ENCODE measurements at regions of chr6 and their contacts with region 1.

Region 1: GRCh38 chr6:31139599-31139998 is 733 bp upstream of the PSORS1C2 start:
- DNase-seq: no peak
- ATAC-seq: no peak
- H3K4me3 ChIP-seq: no peak overlapping the region
- H3K27ac ChIP-seq: no peak overlapping the region
- H3K4me1 ChIP-seq: no peaks in the 10 kb centered on the region
- H3K27me3 ChIP-seq: no peaks in the 10 kb centered on the region
- CTCF ChIP-seq: no peak
- POLR2A ChIP-seq: no peak

Region 2: GRCh38 chr6:29720863-29721262 is 1418.7 kb before region 1 on chr6:
- in situ Hi-C with region 1: no loop called
- intact Hi-C with region 1: no loop called
- DNase-seq: no peak
- ATAC-seq: no peak
- H3K4me3 ChIP-seq: no peak overlapping the region
- H3K27ac ChIP-seq: no peak overlapping the region
- H3K4me1 ChIP-seq: no peaks in the 10 kb centered on the region
- H3K27me3 ChIP-seq: peaks cover 0 to 16% (median 9%) of the 10 kb centered on the region in 3 donors
- CTCF ChIP-seq: no peak
- POLR2A ChIP-seq: no peak

Region 3: DNA sequence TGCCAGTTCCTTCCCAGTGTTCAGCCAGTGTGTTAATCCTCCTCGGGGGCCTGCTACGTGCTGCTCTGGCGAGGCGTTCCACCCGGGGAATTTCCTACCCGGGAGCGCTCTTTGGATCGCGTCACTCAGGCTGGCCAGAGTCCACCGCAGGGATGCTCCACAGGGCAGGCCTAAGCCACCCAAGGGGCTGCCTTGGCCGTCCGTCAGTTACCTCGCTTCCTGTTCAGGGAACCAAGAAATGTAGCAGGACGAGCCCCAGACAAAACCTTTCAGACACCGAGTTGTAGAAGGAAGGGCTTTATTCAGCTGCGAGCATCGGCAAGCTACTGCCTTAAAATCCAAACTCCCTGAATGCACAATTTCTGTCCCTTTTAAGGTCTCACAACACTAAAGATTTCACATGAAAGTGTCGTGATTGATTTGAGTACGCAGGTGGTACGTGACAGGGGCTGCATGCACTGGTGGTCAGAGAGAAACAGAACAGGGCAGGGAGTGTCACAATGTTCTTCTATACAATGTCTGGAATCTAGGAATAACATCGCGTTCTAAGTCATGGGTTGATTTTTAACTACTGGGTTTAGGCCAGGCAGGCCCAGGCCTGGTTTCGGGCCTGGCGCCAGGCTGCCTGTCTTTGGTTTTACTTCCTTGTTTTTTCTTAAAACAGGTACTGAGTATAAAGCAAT is 46.6 kb after region 1 on chr6:
- in situ Hi-C with region 1: loop called (anchors 5 to 10 kb)
- intact Hi-C with region 1: no loop called
- DNase-seq: peak; percentile 52 to 78
- ATAC-seq: peak; percentile 80 to 81
- H3K4me3 ChIP-seq: peak overlapping the region; percentile 37 to 47 (median 42)
- H3K27ac ChIP-seq: peak overlapping the region; percentile 73 to 88 (median 81)
- H3K4me1 ChIP-seq: peaks cover 8 to 16% of the 10 kb centered on the region in 2 donors
- H3K27me3 ChIP-seq: no peaks in the 10 kb centered on the region
- CTCF ChIP-seq: no peak
- POLR2A ChIP-seq: peak; percentile 6 to 50

Region 4: GRCh38 chr6:31366693-31367470 is 227.3 kb after region 1 on chr6:
- in situ Hi-C with region 1: loop called (anchors 5 kb)
- intact Hi-C with region 1: loop called (anchors 1 kb)
- DNase-seq: peak; percentile 48 to 74
- ATAC-seq: peak; percentile 98 to 99
- H3K4me3 ChIP-seq: peak overlapping the region in 3 of 4 donors; percentile 35 to 49 (median 37)
- H3K27ac ChIP-seq: no peak overlapping the region
- H3K4me1 ChIP-seq: no peaks in the 10 kb centered on the region
- H3K27me3 ChIP-seq: peaks cover 0 to 7% (median 4%) of the 10 kb centered on the region in 3 donors
- CTCF ChIP-seq: peak; percentile 81 to 94 (median 94)
- POLR2A ChIP-seq: no peak

Region 5: DNA sequence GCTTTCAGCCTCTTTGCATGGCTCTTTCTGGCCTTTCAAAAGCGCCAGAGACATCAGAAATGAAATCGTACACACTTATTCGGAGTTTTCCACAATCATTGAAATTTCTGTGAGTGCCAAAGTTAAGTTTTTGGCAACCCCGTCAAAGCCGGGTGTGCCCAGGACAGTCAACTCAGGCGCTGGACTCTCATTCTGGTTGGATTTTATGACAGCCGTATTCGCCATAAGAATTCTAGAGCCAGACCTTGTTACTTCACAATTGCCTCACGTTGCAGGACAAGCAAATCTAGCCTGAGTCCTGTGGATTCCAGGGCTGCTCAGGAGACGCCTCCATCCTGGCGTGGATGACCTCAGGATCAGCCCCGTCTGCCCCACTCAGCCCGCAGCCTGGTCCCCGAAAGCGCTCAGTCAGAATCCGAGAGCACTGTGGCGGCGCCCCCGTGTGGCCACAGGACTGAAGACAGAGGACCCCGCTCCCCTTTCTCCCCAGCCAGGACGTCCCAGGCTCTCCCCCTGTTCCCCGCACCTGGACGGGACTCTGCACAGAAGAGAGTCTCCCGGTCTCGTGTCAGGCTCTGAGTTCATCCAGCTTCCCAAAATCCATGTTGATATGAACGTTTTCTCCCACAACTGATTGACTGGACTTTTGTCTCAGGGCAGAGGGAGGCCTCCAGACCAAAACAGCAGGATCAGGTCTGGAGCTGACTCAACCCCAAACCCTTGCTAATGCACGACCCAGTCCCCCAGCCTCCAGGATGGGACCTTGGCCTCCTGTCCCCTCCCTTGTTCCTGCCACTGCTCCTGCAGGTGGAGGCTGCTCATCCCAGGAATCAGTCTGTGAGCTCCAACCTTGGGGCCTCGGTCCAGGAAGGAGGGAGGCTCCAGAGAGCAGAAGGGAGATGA is 302.0 kb after region 1 on chr6:
- in situ Hi-C with region 1: loop called in 1 of 4 experiments (anchors 10 kb)
- intact Hi-C with region 1: no loop called
- DNase-seq: peak; percentile 40 to 70
- ATAC-seq: peak; percentile 82 to 95
- H3K4me3 ChIP-seq: peak overlapping the region in 2 of 4 donors; percentile 40 to 45
- H3K27ac ChIP-seq: no peak overlapping the region
- H3K4me1 ChIP-seq: peaks cover 0 to 4% of the 10 kb centered on the region in 2 donors
- H3K27me3 ChIP-seq: peaks cover 0 to 3% (median 0%) of the 10 kb centered on the region in 3 donors
- CTCF ChIP-seq: peak; percentile 80 to 85 (median 83)
- POLR2A ChIP-seq: no peak

Region 6: GRCh38 chr6:31493875-31494694 is 354.5 kb after region 1 on chr6:
- in situ Hi-C with region 1: no loop called
- intact Hi-C with region 1: no loop called
- DNase-seq: peak; percentile 50 to 59
- ATAC-seq: peak; percentile 71 to 75
- H3K4me3 ChIP-seq: peak overlapping the region; percentile 48 to 64 (median 56)
- H3K27ac ChIP-seq: peak overlapping the region; percentile 44 to 60 (median 58)
- H3K4me1 ChIP-seq: peaks cover 0 to 16% of the 10 kb centered on the region in 2 donors
- H3K27me3 ChIP-seq: peaks cover 10 to 41% (median 35%) of the 10 kb centered on the region in 3 donors
- CTCF ChIP-seq: peak; percentile 50 to 75 (median 60)
- POLR2A ChIP-seq: no peak

Region 7: GRCh38 chr6:32885698-32886286 is 1746.2 kb after region 1 on chr6:
- in situ Hi-C with region 1: no loop called
- intact Hi-C with region 1: no loop called
- DNase-seq: no peak
- ATAC-seq: peak; percentile 43 to 51
- H3K4me3 ChIP-seq: no peak overlapping the region
- H3K27ac ChIP-seq: no peak overlapping the region
- H3K4me1 ChIP-seq: peaks cover 5 to 9% of the 10 kb centered on the region in 2 donors
- H3K27me3 ChIP-seq: no peaks in the 10 kb centered on the region
- CTCF ChIP-seq: peak; percentile 49 to 76 (median 65)
- POLR2A ChIP-seq: no peak

Measured in gastrocnemius medialis (tissue), 4 donors.